GM13977 (cell line): ENCODE measurements at regions of chr12 and their contacts with region 1.

Region 1: GRCh38 chr12:4526923-4527546 is 11.7 kb upstream of the RAD51AP1 start:
- DNase-seq: no peak
- CTCF ChIP-seq: peak; percentile 37

Region 2: GRCh38 chr12:3935078-3935477 is 592.0 kb before region 1 on chr12:
- in situ Hi-C with region 1: no loop called
- DNase-seq: no peak
- CTCF ChIP-seq: no peak

Region 3: DNA sequence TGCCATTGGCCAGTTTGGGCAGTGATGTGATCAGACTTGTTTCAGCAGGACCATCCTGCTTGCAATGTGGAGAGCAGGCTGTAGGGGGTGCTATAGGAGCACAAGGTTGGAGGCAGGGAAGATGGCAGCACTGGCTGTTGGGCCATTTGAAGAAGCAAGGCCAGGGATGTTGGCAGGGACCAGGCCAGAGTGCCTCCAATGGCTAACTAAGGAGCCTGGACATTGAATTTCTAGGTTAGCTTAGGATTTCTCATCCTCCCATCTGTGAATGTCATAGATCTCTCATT is 171.1 kb before region 1 on chr12:
- in situ Hi-C with region 1: loop called (anchors 5 kb)
- DNase-seq: no peak
- CTCF ChIP-seq: peak; percentile 78

Region 4: GRCh38 chr12:4417455-4417854 is 109.6 kb before region 1 on chr12:
- in situ Hi-C with region 1: loop called (anchors 10 kb)
- DNase-seq: no peak
- CTCF ChIP-seq: no peak